Activated CD8-positive, alpha-beta T cell treated with anti-CD3 and anti-CD28 coated beads for 36 hours (primary cell): ENCODE measurements at regions of chr5 and their contacts with region 1.

Region 1: DNA sequence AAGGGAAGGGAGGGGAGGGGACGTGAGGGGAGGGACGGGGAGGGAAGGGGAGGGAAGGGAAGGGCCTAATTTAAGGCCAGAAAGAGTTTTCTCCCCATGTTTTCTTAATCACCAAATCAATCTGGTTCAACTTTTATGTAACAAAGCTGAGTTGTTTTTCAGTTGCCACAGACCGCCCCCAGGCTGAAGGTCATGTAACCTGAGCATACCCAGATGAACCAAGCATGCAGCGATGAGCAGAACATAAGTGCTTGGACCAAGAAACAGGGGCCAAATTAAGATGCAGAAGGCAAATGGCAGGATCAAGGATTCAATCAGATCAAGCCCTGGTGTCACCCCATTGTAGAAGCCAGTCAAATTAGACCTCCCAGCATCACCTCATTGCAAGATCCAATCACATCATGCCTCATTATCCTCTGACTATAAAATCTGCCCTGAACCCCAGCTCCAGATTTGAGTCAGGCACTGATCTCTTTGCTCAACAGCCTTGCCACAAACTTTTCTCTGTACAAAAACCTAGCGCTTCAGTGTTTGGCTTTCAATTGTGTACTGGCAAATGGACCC is 113.5 kb upstream of the TNPO1 start:
- DNase-seq: no peak
- ATAC-seq: no peak
- H3K4me3 Mint-ChIP-seq: no peak overlapping the region
- H3K27ac Mint-ChIP-seq: no peak overlapping the region
- H3K4me1 Mint-ChIP-seq: no peaks in the 10 kb centered on the region
- H3K27me3 Mint-ChIP-seq: peaks cover 12% of the 10 kb centered on the region
- CTCF ChIP-seq: no peak

Region 2: DNA sequence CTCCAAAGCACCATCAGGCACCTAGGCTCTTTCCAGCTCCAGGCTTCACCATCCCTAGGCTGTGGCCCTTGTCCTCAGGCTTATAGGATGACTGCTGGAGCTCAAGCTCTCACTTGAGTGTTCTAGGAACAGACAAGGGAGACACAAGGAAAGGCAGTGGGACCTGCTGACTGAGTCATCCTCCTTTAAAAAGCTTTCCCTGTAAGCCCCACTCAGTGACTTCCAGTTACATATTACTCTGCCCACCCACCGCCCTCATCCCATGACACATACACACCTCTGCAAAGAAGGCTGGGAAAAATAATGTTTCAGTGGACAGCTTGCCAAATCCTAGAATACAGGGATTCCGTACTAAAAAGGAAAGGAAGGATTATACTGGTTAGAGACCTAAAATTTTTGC is 41.5 kb before region 1 on chr5:
- CTCF ChIA-PET with region 1: no interaction called
- POLR2A ChIA-PET with region 1: no interaction called
- intact Hi-C with region 1: no loop called
- DNase-seq: no peak
- ATAC-seq: no peak
- H3K4me3 Mint-ChIP-seq: no peak overlapping the region
- H3K27ac Mint-ChIP-seq: no peak overlapping the region
- H3K4me1 Mint-ChIP-seq: no peaks in the 10 kb centered on the region
- H3K27me3 Mint-ChIP-seq: peaks cover 4% of the 10 kb centered on the region
- CTCF ChIP-seq: no peak

Region 3: DNA sequence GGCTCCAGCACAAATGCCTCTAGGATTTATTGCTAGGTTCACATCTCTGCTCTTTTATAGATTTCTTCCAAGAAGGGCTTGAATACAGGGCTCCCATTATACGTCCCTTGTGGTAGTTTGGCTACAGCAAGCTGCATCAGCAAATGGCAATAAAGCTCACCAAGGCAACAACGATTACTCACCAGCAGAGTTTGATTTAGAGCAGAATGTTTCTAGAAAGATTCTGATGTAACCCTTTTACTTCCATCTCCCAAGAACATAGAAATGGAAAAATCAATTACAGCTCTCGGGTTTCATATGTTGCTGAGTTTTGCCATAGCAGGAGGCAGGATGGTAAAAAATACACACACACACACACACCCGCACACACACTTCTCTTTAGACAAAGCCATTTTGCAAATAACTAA is 10.7 kb before region 1 on chr5:
- CTCF ChIA-PET with region 1: no interaction called
- POLR2A ChIA-PET with region 1: no interaction called
- intact Hi-C with region 1: no loop called
- DNase-seq: no peak
- ATAC-seq: no peak
- H3K4me3 Mint-ChIP-seq: no peak overlapping the region
- H3K27ac Mint-ChIP-seq: no peak overlapping the region
- H3K4me1 Mint-ChIP-seq: no peaks in the 10 kb centered on the region
- H3K27me3 Mint-ChIP-seq: peaks cover 10% of the 10 kb centered on the region
- CTCF ChIP-seq: no peak

Region 4: DNA sequence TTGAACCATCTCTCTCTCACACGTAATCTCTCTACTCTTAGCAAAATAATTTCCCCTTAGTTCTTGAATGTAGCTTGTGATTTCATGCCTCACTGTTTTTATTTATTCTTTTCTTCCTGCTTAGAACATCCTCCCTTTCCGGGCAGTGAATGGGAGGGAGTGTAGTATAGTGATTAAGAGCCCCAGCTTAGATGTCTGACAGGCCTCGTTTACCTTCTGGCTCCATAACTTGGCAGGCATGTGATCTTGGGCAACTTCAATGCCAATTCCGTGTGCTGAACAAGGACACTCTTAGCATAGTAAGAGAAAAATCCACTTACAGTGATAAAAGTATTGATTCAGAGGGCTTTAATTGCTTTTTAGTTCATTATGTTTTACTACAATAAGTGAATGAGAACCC is 17.3 kb after region 1 on chr5:
- CTCF ChIA-PET with region 1: interaction called, 3 read pairs
- POLR2A ChIA-PET with region 1: no interaction called
- intact Hi-C with region 1: loop called (anchors 1 kb)
- DNase-seq: no peak
- ATAC-seq: no peak
- H3K4me3 Mint-ChIP-seq: no peak overlapping the region
- H3K27ac Mint-ChIP-seq: no peak overlapping the region
- H3K4me1 Mint-ChIP-seq: no peaks in the 10 kb centered on the region
- H3K27me3 Mint-ChIP-seq: peaks cover 3% of the 10 kb centered on the region
- CTCF ChIP-seq: no peak